Ovary (tissue), 10 donors: ENCODE measurements at regions of chr11 and their contacts with region 1.

Region 1: GRCh38 chr11:93917673-93918072 is 67.3 kb upstream of the VSTM5 start:
- DNase-seq: no peak
- H3K4me3 ChIP-seq: no peak overlapping the region
- H3K27ac ChIP-seq: no peak overlapping the region
- H3K4me1 ChIP-seq: no peaks in the 10 kb centered on the region
- H3K27me3 ChIP-seq: no peaks in the 10 kb centered on the region
- CTCF ChIP-seq: no peak
- EP300 ChIP-seq: no peak
- POLR2A ChIP-seq: no peak

Region 2: GRCh38 chr11:93796441-93797231 is 121.0 kb before region 1 on chr11:
- intact Hi-C with region 1: no loop called
- DNase-seq: no peak
- H3K4me3 ChIP-seq: no peak overlapping the region
- H3K27ac ChIP-seq: no peak overlapping the region
- H3K4me1 ChIP-seq: no peaks in the 10 kb centered on the region
- H3K27me3 ChIP-seq: no peaks in the 10 kb centered on the region
- CTCF ChIP-seq: no peak
- EP300 ChIP-seq: no peak
- POLR2A ChIP-seq: no peak

Region 3: GRCh38 chr11:93986716-93987115 is 69.0 kb after region 1 on chr11:
- intact Hi-C with region 1: no loop called
- DNase-seq: no peak
- H3K4me3 ChIP-seq: no peak overlapping the region
- H3K27ac ChIP-seq: no peak overlapping the region
- H3K4me1 ChIP-seq: no peaks in the 10 kb centered on the region
- H3K27me3 ChIP-seq: no peaks in the 10 kb centered on the region
- CTCF ChIP-seq: no peak
- EP300 ChIP-seq: no peak
- POLR2A ChIP-seq: no peak

Region 4: GRCh38 chr11:94169516-94169915 is 251.8 kb after region 1 on chr11:
- intact Hi-C with region 1: loop called in 1 of 4 experiments (anchors 10 kb)
- DNase-seq: no peak
- H3K4me3 ChIP-seq: no peak overlapping the region
- H3K27ac ChIP-seq: no peak overlapping the region
- H3K4me1 ChIP-seq: no peaks in the 10 kb centered on the region
- H3K27me3 ChIP-seq: no peaks in the 10 kb centered on the region
- CTCF ChIP-seq: no peak
- EP300 ChIP-seq: no peak
- POLR2A ChIP-seq: no peak